ENCODE measurements at regions of chr1 and their contacts with region 1.

Region 1: GRCh38 chr1:185156854-185157598 is at the starts of genes SWT1 and TRMT1L:
- DNase-seq: peak; percentile 96 to 99
- ATAC-seq: peak; percentile 89 to 98 (median 91)
- H3K4me3 ChIP-seq: peak within 1 kb of the TSS; percentile 84
- H3K4me3 Mint-ChIP-seq: peak within 1 kb of the TSS; percentile 100
- H3K27ac ChIP-seq: peak within 1 kb of the TSS; percentile 96
- H3K27ac Mint-ChIP-seq: peak within 1 kb of the TSS; percentile 95 to 99
- H3K4me1 ChIP-seq: peaks cover 12% of the 10 kb centered on the region
- H3K4me1 Mint-ChIP-seq: peaks cover 27 to 37% of the 10 kb centered on the region in 2 donors
- H3K27me3 ChIP-seq: no peaks in the 10 kb centered on the region
- H3K27me3 Mint-ChIP-seq: no peaks in the 10 kb centered on the region
- CTCF ChIP-seq: no peak
- total RNA-seq, gene SWT1: 4.0 to 5.3 (median 5.1) TPM
- total RNA-seq, gene TRMT1L: 4.4 to 8.2 (median 4.9) TPM

Region 2: GRCh38 chr1:184754476-184755225 is 402.4 kb before region 1 on chr1 and contains the start of gene EDEM3:
- intact Hi-C with region 1: loop called (anchors 1 kb)
- DNase-seq: peak; percentile 93 to 99
- ATAC-seq: peak; percentile 91 to 99 (median 92)
- H3K4me3 ChIP-seq: peak within 1 kb of the TSS; percentile 92
- H3K4me3 Mint-ChIP-seq: peak within 1 kb of the TSS; percentile 96
- H3K27ac ChIP-seq: peak within 1 kb of the TSS; percentile 87
- H3K27ac Mint-ChIP-seq: peak within 1 kb of the TSS; percentile 80 to 96
- H3K4me1 ChIP-seq: peaks cover 6% of the 10 kb centered on the region
- H3K4me1 Mint-ChIP-seq: peaks cover 32 to 33% of the 10 kb centered on the region in 2 donors
- H3K27me3 ChIP-seq: no peaks in the 10 kb centered on the region
- H3K27me3 Mint-ChIP-seq: peaks cover 0 to 20% of the 10 kb centered on the region in 2 donors
- CTCF ChIP-seq: no peak
- total RNA-seq, gene EDEM3: 8.9 to 15.4 (median 15.1) TPM

Region 3: DNA sequence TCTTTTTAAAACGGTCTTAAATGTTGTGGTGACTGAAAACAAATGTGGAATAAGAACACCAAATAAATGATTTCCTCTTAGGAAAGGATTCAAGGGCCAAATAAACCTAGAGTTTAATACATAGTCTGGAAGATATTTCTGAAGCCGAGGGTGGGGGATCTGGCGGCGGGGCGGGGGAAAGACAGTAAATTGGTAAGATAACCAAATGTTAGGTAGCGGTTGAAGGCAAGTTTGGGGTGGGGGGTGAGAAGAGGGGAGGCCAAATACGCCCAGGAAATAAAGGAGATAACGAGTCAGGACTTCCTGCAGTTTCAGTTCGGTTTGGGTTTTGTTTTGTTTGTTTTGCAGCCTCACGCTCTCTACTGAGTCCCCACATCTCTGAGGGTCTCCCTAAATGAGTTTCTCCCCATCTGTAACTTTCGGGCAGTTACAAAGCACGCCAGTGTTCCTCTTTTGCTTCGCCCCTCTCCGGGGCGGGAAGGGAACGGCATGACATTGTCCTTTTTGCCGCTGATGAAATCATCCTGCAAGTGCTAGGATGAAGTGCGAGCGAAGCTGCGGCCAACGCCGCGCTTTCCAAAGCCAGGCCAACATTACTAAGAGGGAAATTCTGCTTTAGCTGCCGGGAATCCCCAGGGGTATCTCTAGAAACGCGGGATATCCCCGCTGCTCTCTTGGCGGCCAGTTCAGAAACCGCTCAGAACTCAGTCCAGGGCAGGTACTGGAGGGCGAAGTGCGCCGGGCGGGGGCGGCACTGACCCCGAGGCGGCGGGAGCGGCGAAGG is 183.6 kb before region 1 on chr1:
- intact Hi-C with region 1: loop called (anchors 5 kb)
- DNase-seq: peak in 1 of 2 donors; percentile 87
- ATAC-seq: peak; percentile 70 to 77 (median 74)
- H3K4me3 ChIP-seq: peak overlapping the region; percentile 64
- H3K4me3 Mint-ChIP-seq: peak overlapping the region; percentile 93
- H3K27ac ChIP-seq: peak overlapping the region; percentile 80
- H3K27ac Mint-ChIP-seq: peak overlapping the region; percentile 37 to 63
- H3K4me1 ChIP-seq: peaks cover 25% of the 10 kb centered on the region
- H3K4me1 Mint-ChIP-seq: peaks cover 43 to 55% of the 10 kb centered on the region in 2 donors
- H3K27me3 ChIP-seq: no peaks in the 10 kb centered on the region
- H3K27me3 Mint-ChIP-seq: no peaks in the 10 kb centered on the region
- CTCF ChIP-seq: no peak

Region 4: GRCh38 chr1:185044981-185045813 is 111.8 kb before region 1 on chr1 and contains the start of gene RNF2:
- intact Hi-C with region 1: loop called (anchors 1 kb)
- DNase-seq: peak; percentile 75 to 92
- ATAC-seq: peak; percentile 87 to 95 (median 87)
- H3K4me3 ChIP-seq: peak within 1 kb of the TSS; percentile 89
- H3K4me3 Mint-ChIP-seq: peak within 1 kb of the TSS; percentile 94
- H3K27ac ChIP-seq: peak within 1 kb of the TSS; percentile 74
- H3K27ac Mint-ChIP-seq: peak within 1 kb of the TSS; percentile 80 to 93
- H3K4me1 ChIP-seq: peaks cover 3% of the 10 kb centered on the region
- H3K4me1 Mint-ChIP-seq: peaks cover 38 to 48% of the 10 kb centered on the region in 2 donors
- H3K27me3 ChIP-seq: no peaks in the 10 kb centered on the region
- H3K27me3 Mint-ChIP-seq: no peaks in the 10 kb centered on the region
- CTCF ChIP-seq: no peak
- total RNA-seq, gene RNF2: 14.0 to 21.9 (median 19.5) TPM

Region 5: GRCh38 chr1:185284533-185285276 is 127.7 kb after region 1 on chr1:
- intact Hi-C with region 1: no loop called
- DNase-seq: no peak
- ATAC-seq: no peak
- H3K4me3 ChIP-seq: no peak overlapping the region
- H3K4me3 Mint-ChIP-seq: no peak overlapping the region
- H3K27ac ChIP-seq: no peak overlapping the region
- H3K27ac Mint-ChIP-seq: no peak overlapping the region
- H3K4me1 ChIP-seq: peaks cover 12% of the 10 kb centered on the region
- H3K4me1 Mint-ChIP-seq: peaks cover 14 to 25% of the 10 kb centered on the region in 2 donors
- H3K27me3 ChIP-seq: no peaks in the 10 kb centered on the region
- H3K27me3 Mint-ChIP-seq: no peaks in the 10 kb centered on the region
- CTCF ChIP-seq: no peak

Region 6: GRCh38 chr1:185566995-185567394 is 410.0 kb after region 1 on chr1:
- intact Hi-C with region 1: loop called (anchors 5 kb)
- DNase-seq: peak in 1 of 2 donors; percentile 94
- ATAC-seq: peak; percentile 81 to 89 (median 86)
- H3K4me3 ChIP-seq: no peak overlapping the region
- H3K4me3 Mint-ChIP-seq: peak overlapping the region; percentile 90
- H3K27ac ChIP-seq: peak overlapping the region; percentile 92
- H3K27ac Mint-ChIP-seq: peak overlapping the region; percentile 91 to 99
- H3K4me1 ChIP-seq: peaks cover 11% of the 10 kb centered on the region
- H3K4me1 Mint-ChIP-seq: peaks cover 41 to 51% of the 10 kb centered on the region in 2 donors
- H3K27me3 ChIP-seq: no peaks in the 10 kb centered on the region
- H3K27me3 Mint-ChIP-seq: no peaks in the 10 kb centered on the region
- CTCF ChIP-seq: no peak

Region 7: DNA sequence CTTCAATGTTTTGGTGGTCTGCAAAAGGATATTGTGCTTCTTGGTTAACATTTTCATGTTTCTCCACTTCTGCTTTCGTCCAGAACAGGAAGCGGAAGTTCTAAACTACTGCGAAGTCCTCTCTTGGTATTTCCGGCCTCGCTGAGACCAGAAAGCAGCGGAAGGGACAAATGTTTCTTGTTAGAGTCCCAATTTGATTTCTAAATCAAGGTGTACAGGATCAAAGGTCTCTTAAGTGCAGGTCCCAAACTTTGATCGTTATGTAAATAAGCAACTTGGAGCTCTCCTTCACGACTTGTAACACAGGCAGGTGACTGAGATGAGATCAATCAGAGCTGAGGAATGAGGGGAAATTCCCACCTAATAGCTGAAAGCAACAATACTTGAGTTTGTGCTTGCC is 537.1 kb after region 1 on chr1:
- intact Hi-C with region 1: loop called (anchors 10 kb)
- DNase-seq: peak in 1 of 2 donors; percentile 63
- ATAC-seq: peak; percentile 68 to 78 (median 75)
- H3K4me3 ChIP-seq: peak overlapping the region; percentile 32
- H3K4me3 Mint-ChIP-seq: peak overlapping the region; percentile 86
- H3K27ac ChIP-seq: peak overlapping the region; percentile 83
- H3K27ac Mint-ChIP-seq: peak overlapping the region; percentile 90 to 91
- H3K4me1 ChIP-seq: peaks cover 11% of the 10 kb centered on the region
- H3K4me1 Mint-ChIP-seq: peaks cover 12% of the 10 kb centered on the region in 2 donors
- H3K27me3 ChIP-seq: peaks cover 4% of the 10 kb centered on the region
- H3K27me3 Mint-ChIP-seq: peaks cover 28 to 42% of the 10 kb centered on the region in 2 donors
- CTCF ChIP-seq: no peak

Measured in natural killer cell (primary cell).